A673 (cell line): ENCODE measurements at regions of chr1 and their contacts with region 1.

Region 1: DNA sequence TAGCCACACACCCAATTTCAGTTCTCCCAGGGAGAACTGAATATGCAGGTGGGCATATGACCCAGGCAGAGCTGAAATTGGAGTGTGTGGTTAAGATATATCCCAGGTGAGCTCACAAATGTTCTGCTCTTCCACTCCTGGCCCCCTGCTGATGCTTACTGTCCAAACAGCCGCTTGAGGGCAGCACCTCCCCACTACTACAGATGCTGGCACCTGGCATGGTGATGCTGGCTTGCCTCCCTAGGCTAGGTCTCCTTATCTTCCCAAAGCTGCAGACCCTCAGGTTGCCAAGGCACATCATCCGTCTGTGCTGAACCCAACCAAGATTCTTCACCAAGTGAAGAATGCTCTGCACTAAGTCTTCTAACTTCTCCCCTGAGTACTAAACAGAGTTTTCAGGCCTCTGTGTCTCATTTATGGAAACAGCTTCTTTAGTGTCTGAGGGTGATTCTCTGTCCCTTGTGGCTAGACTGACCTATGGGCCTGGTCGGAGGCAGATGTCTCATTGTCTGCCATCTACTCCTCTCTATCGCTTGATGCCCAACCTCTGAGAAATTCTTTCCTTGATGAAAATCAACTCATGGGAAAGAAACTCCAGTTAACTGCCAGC is 27.2 kb downstream of the XCL1 start:
- DNase-seq: peak; percentile 76
- H3K4me3 ChIP-seq: no peak overlapping the region
- H3K27ac ChIP-seq: no peak overlapping the region
- H3K4me1 ChIP-seq: no peaks in the 10 kb centered on the region
- H3K27me3 ChIP-seq: no peaks in the 10 kb centered on the region
- CTCF ChIP-seq: peak; percentile 79

Region 2: DNA sequence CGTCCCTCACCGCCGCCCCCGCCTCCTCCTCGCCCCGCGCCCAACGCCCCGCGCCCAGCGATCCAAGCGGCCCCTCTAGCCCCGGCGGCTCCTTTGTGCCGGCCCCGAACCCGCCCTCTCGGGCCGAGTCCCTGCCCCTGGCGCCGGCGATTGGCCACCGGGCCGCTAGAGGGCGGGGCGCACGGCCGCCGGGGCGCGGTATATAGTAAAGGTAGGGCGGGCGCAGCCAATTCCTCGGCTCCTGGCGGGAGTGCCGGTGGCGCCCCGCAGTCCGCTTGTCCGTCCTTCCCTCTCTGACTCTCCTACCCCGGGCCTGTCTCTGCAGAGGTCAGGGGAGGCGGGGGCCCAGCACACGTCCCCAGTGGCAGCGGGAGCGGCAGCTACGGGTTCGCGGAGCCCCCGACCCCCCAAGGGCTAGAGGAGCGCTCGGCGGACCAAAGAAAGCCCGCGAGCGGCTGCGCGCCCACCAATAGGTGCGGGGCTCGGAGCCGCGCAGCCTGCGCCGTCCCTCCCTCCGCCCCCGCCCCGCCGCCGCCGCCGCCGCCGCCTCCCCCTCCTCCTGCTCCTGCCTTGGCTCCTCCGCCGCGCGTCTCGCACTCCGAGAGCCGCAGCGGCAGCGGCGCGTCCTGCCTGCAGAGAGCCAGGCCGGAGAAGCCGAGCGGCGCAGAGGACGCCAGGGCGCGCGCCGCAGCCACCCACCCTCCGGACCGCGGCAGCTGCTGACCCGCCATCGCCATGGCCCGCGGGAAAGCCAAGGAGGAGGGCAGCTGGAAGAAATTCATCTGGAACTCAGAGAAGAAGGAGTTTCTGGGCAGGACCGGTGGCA is 502.7 kb after region 1 on chr1 and contains the start of gene ATP1B1:
- CTCF ChIA-PET with region 1: no interaction called
- POLR2A ChIA-PET with region 1: no interaction called
- intact Hi-C with region 1: loop called (anchors 10 kb)
- DNase-seq: peak; percentile 88
- H3K4me3 ChIP-seq: peak within 1 kb of the TSS; percentile 70
- H3K27ac ChIP-seq: peak within 1 kb of the TSS; percentile 47
- H3K4me1 ChIP-seq: peaks cover 14% of the 10 kb centered on the region
- H3K27me3 ChIP-seq: no peaks in the 10 kb centered on the region
- CTCF ChIP-seq: no peak
- total RNA-seq, gene ATP1B1: 20.2 and 23.7 TPM in 2 replicates

Region 3: GRCh38 chr1:169348383-169349036 is 744.9 kb after region 1 on chr1:
- CTCF ChIA-PET with region 1: interaction called, 28 read pairs
- POLR2A ChIA-PET with region 1: no interaction called
- intact Hi-C with region 1: loop called (anchors 2 kb)
- DNase-seq: peak; percentile 76
- H3K4me3 ChIP-seq: no peak overlapping the region
- H3K27ac ChIP-seq: no peak overlapping the region
- H3K4me1 ChIP-seq: no peaks in the 10 kb centered on the region
- H3K27me3 ChIP-seq: no peaks in the 10 kb centered on the region
- CTCF ChIP-seq: peak; percentile 83

Region 4: GRCh38 chr1:169466259-169467230 is 862.9 kb after region 1 on chr1:
- CTCF ChIA-PET with region 1: interaction called, 5 read pairs
- POLR2A ChIA-PET with region 1: no interaction called
- intact Hi-C with region 1: loop called (anchors 10 kb)
- DNase-seq: peak; percentile 61
- H3K4me3 ChIP-seq: no peak overlapping the region
- H3K27ac ChIP-seq: peak overlapping the region; percentile 7
- H3K4me1 ChIP-seq: peaks cover 12% of the 10 kb centered on the region
- H3K27me3 ChIP-seq: no peaks in the 10 kb centered on the region
- CTCF ChIP-seq: peak; percentile 56

Region 5: DNA sequence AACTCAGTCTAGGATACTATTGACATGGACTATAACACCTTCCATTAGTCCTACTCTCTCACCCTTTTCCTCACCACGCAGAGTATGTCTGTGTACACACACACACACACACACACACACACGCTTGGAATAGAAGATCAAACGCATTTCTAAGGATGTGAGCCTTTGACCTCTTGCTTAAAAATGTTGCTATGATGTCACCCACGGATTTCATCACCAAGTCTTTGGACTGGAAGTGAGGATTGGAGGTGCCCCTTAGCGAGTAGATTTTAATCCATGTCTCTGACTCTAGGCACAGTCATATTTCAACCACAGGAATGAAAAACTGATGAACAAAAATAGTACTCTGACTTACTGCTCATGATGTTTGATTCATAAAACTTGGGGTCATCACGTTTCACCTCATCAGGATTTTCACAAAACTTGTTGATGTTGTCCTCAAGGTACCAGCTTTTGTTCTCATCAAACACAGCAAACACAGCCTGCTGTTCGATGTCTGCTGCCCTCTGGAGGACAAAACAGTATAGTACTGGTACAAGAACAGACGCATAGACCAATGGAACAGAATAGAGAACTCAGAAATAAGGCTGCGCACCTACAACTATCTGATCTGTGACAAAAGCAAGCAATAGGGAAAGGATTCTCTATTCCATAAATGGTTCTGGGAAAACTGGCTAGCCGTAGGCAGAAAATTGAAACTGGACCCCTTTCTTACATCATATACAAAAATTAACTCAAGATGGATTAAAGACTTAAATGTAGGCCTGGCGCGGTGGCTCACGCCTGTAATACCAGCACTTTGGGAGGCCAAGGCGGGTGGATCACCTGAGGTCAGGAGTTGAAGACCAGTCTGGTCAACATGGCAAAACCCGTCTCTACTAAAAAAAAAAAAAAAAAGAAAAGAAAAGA is 942.7 kb after region 1 on chr1:
- CTCF ChIA-PET with region 1: interaction called, 8 read pairs
- POLR2A ChIA-PET with region 1: no interaction called
- intact Hi-C with region 1: loop called (anchors 5 kb)
- DNase-seq: peak; percentile 80
- H3K4me3 ChIP-seq: no peak overlapping the region
- H3K27ac ChIP-seq: no peak overlapping the region
- H3K4me1 ChIP-seq: no peaks in the 10 kb centered on the region
- H3K27me3 ChIP-seq: no peaks in the 10 kb centered on the region
- CTCF ChIP-seq: peak; percentile 80

Region 6: GRCh38 chr1:169711469-169712281 is 1108.1 kb after region 1 on chr1 and contains the start of gene SELL:
- CTCF ChIA-PET with region 1: no interaction called
- POLR2A ChIA-PET with region 1: no interaction called
- intact Hi-C with region 1: loop called (anchors 10 kb)
- DNase-seq: peak; percentile 79
- H3K4me3 ChIP-seq: peak within 1 kb of the TSS; percentile 24
- H3K27ac ChIP-seq: no peak within 1 kb of the TSS
- H3K4me1 ChIP-seq: no peaks in the 10 kb centered on the region
- H3K27me3 ChIP-seq: peaks cover 23% of the 10 kb centered on the region
- CTCF ChIP-seq: peak; percentile 83
- total RNA-seq, gene SELL: not detected in 2 replicates

Region 7: GRCh38 chr1:169809370-169810095 is 1205.9 kb after region 1 on chr1:
- CTCF ChIA-PET with region 1: no interaction called
- POLR2A ChIA-PET with region 1: no interaction called
- intact Hi-C with region 1: loop called (anchors 5 kb)
- DNase-seq: peak; percentile 44
- H3K4me3 ChIP-seq: no peak overlapping the region
- H3K27ac ChIP-seq: no peak overlapping the region
- H3K4me1 ChIP-seq: no peaks in the 10 kb centered on the region
- H3K27me3 ChIP-seq: no peaks in the 10 kb centered on the region
- CTCF ChIP-seq: peak; percentile 68